ENCODE measurements at regions of chr3 and their contacts with region 1.

Region 1: GRCh38 chr3:143825513-143825912 is 22.8 kb downstream of the SLC9A9 start:
- DNase-seq: peak in 1 of 2 donors; percentile 69
- ATAC-seq: peak; percentile 93 to 98 (median 96)
- H3K4me3 ChIP-seq: no peak overlapping the region
- H3K4me3 Mint-ChIP-seq: peak overlapping the region; percentile 66
- H3K27ac ChIP-seq: no peak overlapping the region
- H3K27ac Mint-ChIP-seq: peak overlapping the region; percentile 27 to 75
- H3K4me1 ChIP-seq: peaks cover 18% of the 10 kb centered on the region
- H3K4me1 Mint-ChIP-seq: peaks cover 41 to 59% of the 10 kb centered on the region in 2 donors
- H3K27me3 ChIP-seq: no peaks in the 10 kb centered on the region
- H3K27me3 Mint-ChIP-seq: no peaks in the 10 kb centered on the region
- CTCF ChIP-seq: no peak

Region 2: DNA sequence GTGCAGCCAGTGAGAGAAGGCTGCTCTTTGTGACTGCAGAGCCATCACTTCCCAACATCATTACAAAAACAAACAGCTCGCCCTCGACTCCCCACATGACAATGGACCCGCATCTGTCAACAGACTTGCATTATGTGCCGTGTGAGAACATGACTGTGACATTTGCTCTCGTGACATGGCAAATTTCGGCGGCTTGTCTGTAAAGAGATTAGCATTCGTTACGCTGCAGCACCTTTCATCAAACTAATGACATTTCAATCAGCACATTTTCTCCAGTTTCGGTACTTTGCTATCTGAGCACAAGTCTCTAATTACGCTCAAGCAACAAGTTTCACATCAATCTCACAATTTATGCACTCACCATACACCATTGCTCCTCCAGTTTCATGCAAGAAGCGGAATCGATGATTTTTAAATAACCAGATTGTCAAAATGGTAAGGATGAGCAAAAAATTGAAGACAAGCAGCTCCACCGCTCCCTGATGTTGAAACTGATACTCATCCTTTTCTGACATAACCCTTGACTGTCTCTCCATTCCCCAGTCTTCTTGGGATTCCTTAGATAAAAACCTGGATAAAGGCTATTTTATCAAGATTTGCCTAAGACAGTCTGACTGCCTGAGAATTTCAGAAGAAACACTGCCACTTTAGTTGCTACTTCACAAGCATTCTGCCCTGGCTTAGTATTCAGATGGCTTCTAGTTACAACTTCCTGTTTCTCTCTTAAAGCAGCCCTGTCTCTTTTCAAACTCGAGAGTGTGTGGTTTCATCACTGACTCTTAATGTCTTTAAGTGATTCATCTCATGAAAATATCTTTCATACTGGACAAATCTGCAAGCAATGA is 22.5 kb after region 1 on chr3 and contains the start of gene SLC9A9:
- intact Hi-C with region 1: loop called (anchors 1 kb)
- DNase-seq: peak; percentile 19 to 65
- ATAC-seq: peak; percentile 88 to 93 (median 92)
- H3K4me3 ChIP-seq: peak within 1 kb of the TSS; percentile 62
- H3K4me3 Mint-ChIP-seq: peak within 1 kb of the TSS; percentile 100
- H3K27ac ChIP-seq: peak within 1 kb of the TSS; percentile 49
- H3K27ac Mint-ChIP-seq: peak within 1 kb of the TSS; percentile 93
- H3K4me1 ChIP-seq: peaks cover 3% of the 10 kb centered on the region
- H3K4me1 Mint-ChIP-seq: peaks cover 38 to 48% of the 10 kb centered on the region in 2 donors
- H3K27me3 ChIP-seq: no peaks in the 10 kb centered on the region
- H3K27me3 Mint-ChIP-seq: peaks cover 0 to 5% of the 10 kb centered on the region in 2 donors
- CTCF ChIP-seq: no peak
- total RNA-seq, gene SLC9A9: 24.0 to 29.1 (median 27.2) TPM

Measured in natural killer cell (primary cell).